ENCODE measurements at regions of chr12 and their contacts with region 1.

Region 1: DNA sequence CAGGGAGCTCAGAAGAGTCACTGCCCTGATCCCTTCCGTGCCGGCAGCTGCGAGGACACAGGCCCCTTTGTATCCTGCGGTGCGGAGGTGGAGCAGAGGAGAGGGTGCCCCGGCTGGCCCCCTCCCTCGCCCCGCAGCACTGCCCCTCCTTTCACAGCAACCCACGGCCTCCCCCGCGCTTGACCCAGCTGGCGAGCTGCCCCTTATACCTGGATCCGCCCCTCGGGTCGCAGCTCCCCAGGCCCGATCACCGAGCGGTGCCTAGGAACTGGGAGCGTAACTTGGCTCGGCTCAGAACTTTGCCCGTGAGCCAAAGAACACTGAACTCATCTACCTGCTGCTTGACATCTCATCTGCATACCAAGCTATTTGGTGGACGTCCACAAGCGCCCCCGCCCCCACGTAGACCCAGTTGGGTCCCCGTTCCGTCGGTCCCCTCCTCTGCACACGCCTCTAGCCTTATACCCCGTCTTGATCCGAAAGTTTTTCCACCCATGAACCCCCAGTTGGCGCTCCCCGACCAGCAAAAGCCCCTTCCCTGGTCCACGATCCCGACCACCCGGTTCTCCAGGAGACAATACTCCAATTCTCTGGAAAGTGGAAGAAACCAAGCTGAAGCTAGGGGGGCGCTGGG is 697 bp upstream of the DNAJC14 start:
- DNase-seq: peak; percentile 90

Region 2: DNA sequence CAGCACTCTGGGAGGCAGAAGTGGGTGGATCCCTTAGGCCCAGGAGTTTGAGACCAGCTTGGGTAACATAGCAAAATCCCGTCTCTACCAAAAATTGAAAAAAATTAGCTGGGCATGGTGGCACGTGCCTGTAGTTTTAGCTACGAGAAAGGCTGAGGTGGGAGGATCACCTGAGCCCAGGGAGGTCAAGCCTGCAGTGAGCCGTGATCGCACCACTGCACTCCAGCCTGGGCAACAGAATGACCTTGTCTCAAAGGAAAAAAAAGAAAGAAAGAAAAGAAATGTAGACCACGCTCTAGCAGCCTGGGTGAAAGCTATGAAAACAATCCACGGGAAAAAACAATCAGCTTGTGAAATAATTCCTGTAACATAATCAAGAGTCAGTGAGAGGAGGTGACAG is 41.5 kb before region 1 on chr12:
- intact Hi-C with region 1: loop called in 1 of 2 experiments (anchors 1 kb)
- DNase-seq: no peak

Measured in posterior vena cava (tissue), 2 donors.